Activated CD4-positive, alpha-beta memory T cell treated with anti-CD3 and anti-CD28 coated beads, Interleukin-2, amount 10 ng/mL, durations not matched to agents 7 days and 5 days (primary cell): ENCODE measurements at regions of chr4 and their contacts with region 1.

Region 1: DNA sequence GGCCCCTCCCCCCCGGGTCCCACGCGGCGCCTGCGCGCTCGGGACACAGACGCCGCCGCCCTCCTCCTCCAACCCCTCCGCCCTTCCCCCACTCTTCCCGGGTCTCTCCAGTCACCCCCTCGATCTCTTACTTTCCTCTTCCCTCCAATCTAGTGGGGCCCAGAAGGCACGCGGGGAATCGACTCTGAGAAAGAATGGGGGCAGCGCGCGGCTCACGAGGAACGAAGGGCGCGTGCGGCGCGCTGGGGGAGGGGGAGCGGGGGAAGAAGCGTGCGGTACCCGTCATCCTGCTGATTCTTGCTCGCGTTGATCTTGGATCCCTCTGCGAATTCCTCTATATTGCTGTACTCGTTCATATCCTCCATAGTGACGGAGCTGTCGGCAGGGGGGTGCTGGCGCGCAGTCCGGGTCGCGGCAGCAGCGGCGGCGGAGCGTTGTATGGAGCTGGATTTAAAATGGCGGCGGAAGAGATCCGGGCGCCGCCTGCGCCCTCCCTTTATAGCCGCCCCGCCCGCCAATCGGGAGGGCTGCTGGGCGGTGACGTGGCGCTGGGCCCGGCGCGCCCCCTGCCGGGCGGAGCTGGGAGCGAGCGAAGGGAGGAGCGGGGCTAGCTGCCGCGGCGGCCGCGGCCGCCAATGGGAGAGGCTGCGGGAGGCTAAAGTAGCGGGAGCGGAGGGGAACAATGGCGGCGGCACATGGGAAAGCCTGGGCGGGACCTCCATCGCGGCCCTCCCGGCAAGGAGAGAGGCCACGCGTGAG is 1.1 kb downstream of the HNRNPDL start:
- DNase-seq: peak; percentile 94
- H3K4me3 Mint-ChIP-seq: peak overlapping the region; percentile 98
- H3K27ac Mint-ChIP-seq: peak overlapping the region; percentile 95
- H3K4me1 Mint-ChIP-seq: peaks cover 68% of the 10 kb centered on the region
- H3K27me3 Mint-ChIP-seq: no peaks in the 10 kb centered on the region

Region 2: DNA sequence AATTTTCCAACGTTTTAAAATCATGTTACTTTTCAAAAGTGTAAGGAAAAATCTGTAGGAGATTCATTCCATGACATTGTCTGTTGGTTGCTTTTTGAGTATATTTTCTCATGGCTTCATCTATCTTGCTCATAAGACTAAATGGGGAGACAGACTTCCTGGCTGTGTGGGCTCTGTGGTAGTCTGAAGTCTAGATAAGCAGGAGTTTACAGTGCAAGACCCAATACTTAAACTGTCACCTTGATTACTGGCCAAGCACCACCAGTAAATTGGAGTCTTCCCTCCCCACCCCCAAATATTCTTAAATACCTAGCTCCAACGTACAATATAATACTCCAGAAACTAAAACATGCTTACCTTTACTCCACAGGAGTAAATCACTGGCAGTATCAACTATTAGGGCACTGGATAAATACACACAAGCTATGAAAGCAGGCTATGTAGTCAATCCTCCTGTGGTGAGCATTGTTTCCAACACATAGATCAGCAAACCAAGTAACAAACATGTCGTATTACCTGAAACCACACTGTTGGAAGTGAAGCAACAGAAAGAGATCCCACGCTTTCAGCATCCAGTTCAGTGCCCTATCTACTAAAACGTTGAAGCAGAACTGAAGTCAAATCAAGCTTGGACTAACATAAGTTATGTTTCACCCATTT is 61.6 kb before region 1 on chr4:
- CTCF ChIA-PET with region 1: interaction called, 38 read pairs
- POLR2A ChIA-PET with region 1: interaction called, 313 read pairs
- DNase-seq: no peak
- H3K4me3 Mint-ChIP-seq: no peak overlapping the region
- H3K27ac Mint-ChIP-seq: peak overlapping the region; percentile 60
- H3K4me1 Mint-ChIP-seq: peaks cover 78% of the 10 kb centered on the region
- H3K27me3 Mint-ChIP-seq: no peaks in the 10 kb centered on the region

Region 3: GRCh38 chr4:82388405-82388804 is 40.7 kb before region 1 on chr4:
- CTCF ChIA-PET with region 1: no interaction called
- POLR2A ChIA-PET with region 1: interaction called, 10 read pairs
- DNase-seq: no peak
- H3K4me3 Mint-ChIP-seq: no peak overlapping the region
- H3K27ac Mint-ChIP-seq: no peak overlapping the region
- H3K4me1 Mint-ChIP-seq: no peaks in the 10 kb centered on the region
- H3K27me3 Mint-ChIP-seq: peaks cover 4% of the 10 kb centered on the region

Region 4: GRCh38 chr4:82450966-82451755 is 22.0 kb after region 1 on chr4:
- CTCF ChIA-PET with region 1: interaction called, 5 read pairs
- POLR2A ChIA-PET with region 1: interaction called, 15 read pairs
- DNase-seq: no peak
- H3K4me3 Mint-ChIP-seq: no peak overlapping the region
- H3K27ac Mint-ChIP-seq: no peak overlapping the region
- H3K4me1 Mint-ChIP-seq: peaks cover 6% of the 10 kb centered on the region
- H3K27me3 Mint-ChIP-seq: no peaks in the 10 kb centered on the region

Region 5: DNA sequence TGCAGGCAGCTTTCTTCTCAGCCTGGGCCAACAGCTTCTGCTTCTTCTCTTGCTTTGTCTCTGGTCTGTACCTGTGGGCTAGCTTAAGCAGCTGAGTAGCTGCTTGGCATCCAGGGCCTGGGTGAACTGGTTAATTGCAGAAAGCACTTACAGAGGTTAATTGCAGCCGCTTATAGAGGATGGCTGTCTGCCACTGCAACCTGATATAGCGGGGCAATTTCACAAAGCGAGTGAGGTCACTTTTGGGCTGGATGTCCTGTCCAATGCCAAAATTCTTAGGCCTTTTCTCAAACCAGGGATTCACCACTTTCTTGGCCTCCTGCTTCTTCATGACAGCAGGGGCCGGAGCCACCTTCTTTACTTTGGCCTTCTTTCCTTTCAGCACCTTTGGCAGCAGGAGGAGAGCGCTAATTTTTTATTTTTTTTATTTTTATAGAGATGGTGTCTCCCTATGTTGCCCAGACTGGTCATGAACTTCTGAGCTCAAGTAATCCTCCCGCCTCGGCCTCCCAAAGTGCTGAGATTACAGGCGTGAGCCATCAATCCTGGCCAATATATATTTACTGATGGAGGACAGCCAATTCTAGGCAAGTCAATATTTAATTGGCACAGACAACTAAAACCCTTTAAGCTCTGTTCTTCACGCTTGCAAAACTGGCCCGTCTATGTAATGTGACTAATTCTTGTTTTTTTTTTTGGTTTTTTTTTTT is 62.3 kb after region 1 on chr4:
- CTCF ChIA-PET with region 1: no interaction called
- POLR2A ChIA-PET with region 1: no interaction called
- DNase-seq: no peak
- H3K4me3 Mint-ChIP-seq: no peak overlapping the region
- H3K27ac Mint-ChIP-seq: no peak overlapping the region
- H3K4me1 Mint-ChIP-seq: no peaks in the 10 kb centered on the region
- H3K27me3 Mint-ChIP-seq: no peaks in the 10 kb centered on the region

Region 6: GRCh38 chr4:82577451-82577850 is 148.3 kb after region 1 on chr4:
- CTCF ChIA-PET with region 1: no interaction called
- POLR2A ChIA-PET with region 1: no interaction called
- DNase-seq: no peak
- H3K4me3 Mint-ChIP-seq: no peak overlapping the region
- H3K27ac Mint-ChIP-seq: no peak overlapping the region
- H3K4me1 Mint-ChIP-seq: no peaks in the 10 kb centered on the region
- H3K27me3 Mint-ChIP-seq: peaks cover 23% of the 10 kb centered on the region

Region 7: GRCh38 chr4:83012687-83013419 is 583.7 kb after region 1 on chr4:
- CTCF ChIA-PET with region 1: interaction called, 8 read pairs
- POLR2A ChIA-PET with region 1: interaction called, 18 read pairs
- DNase-seq: peak; percentile 98
- H3K4me3 Mint-ChIP-seq: peak overlapping the region; percentile 88
- H3K27ac Mint-ChIP-seq: peak overlapping the region; percentile 78
- H3K4me1 Mint-ChIP-seq: peaks cover 38% of the 10 kb centered on the region
- H3K27me3 Mint-ChIP-seq: no peaks in the 10 kb centered on the region